SK-N-SH (cell line): ENCODE measurements at regions of chr1 and their contacts with region 1.

Region 1: GRCh38 chr1:207963427-207964194 is 52.7 kb upstream of the CD34 start:
- DNase-seq: peak; percentile 100
- H3K4me3 ChIP-seq: peak overlapping the region; percentile 54 to 55; a peak in 3 of 4 replicates
- H3K27ac ChIP-seq: peak overlapping the region; percentile 37 to 93; a peak in 3 of 4 replicates
- H3K4me1 ChIP-seq: peaks cover 0 to 15% of the 10 kb centered on the region in 2 experiments; a peak in 3 of 4 replicates
- H3K27me3 ChIP-seq: no peaks in the 10 kb centered on the region
- CTCF ChIP-seq: peak; percentile 95
- EP300 ChIP-seq: peak in 1 of 2 experiments; percentile 15; a peak in 1 of 4 replicates
- RAD21 ChIP-seq: peak; percentile 98

Region 2: DNA sequence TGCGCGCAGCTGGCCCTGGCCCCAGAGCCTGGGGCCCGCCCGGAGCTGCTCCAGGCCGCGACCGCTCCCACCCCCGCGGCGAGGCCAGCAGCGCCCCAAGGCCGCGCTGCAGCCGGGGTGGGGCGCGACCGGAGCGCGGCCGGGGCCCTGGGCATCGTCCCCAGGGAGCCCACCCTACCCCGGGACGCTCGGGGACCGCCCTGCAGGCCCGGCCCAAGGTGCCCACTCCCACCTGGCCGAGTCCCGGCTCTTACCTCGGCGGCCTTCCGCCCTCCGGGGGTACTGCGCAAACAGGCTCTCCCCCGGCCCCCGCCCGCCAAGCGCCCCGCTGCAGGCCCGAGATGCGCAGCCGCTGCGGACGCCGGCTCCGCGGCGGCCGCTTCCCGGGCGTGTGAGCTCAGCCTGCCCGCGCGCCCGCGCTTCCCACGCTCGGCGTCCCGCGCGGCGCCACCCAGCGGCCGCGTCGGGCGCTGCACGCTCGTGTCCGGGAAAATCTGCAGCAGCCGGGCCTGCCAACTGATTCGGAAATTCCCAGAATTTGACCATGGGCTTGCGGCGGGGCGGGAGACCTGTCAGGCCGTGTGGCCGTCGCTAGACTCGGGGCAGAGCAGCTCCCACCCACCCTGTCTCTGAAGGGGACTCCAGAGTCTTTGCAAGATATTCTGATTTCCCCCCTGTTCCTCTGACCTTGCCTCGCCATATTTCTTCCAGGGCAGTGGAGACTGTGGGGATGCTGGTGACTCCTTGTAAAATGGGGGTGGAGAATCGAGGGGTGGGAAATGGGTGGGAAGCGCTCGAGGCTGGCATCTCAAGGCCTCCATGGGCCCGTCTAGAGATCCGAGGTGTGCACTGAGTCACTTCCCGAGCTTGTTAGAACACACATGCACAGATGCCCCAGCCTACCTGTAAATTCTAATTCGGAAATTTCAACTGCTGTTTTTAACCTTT is 94.6 kb before region 1 on chr1:
- CTCF ChIA-PET with region 1: interaction called, 43 read pairs
- POLR2A ChIA-PET with region 1: interaction called, 4 read pairs
- DNase-seq: peak; percentile 93
- H3K4me3 ChIP-seq: peak overlapping the region; percentile 78 to 85
- H3K27ac ChIP-seq: peak overlapping the region in 1 of 2 experiments; percentile 47; a peak in 1 of 4 replicates
- H3K4me1 ChIP-seq: peaks cover 0 to 32% of the 10 kb centered on the region in 2 experiments; a peak in 1 of 4 replicates
- H3K27me3 ChIP-seq: no peaks in the 10 kb centered on the region
- CTCF ChIP-seq: peak; percentile 62
- EP300 ChIP-seq: no peak
- RAD21 ChIP-seq: peak; percentile 54; the same call in 1 of the 2 replicates

Region 3: GRCh38 chr1:207910591-207911354 is 52.8 kb before region 1 on chr1 and contains the start of gene CD34:
- CTCF ChIA-PET with region 1: interaction called, 29 read pairs
- POLR2A ChIA-PET with region 1: no interaction called
- DNase-seq: peak; percentile 76
- H3K4me3 ChIP-seq: peak within 1 kb of the TSS; percentile 43 to 46
- H3K27ac ChIP-seq: no peak within 1 kb of the TSS
- H3K4me1 ChIP-seq: peaks cover 0 to 4% of the 10 kb centered on the region in 2 experiments; a peak in 1 of 4 replicates
- H3K27me3 ChIP-seq: peaks cover 11% of the 10 kb centered on the region; the same call in 1 of the 2 replicates
- CTCF ChIP-seq: no peak
- EP300 ChIP-seq: no peak
- RAD21 ChIP-seq: no peak
- polyA plus RNA-seq, gene CD34: 0.59 and 0.62 TPM in 2 replicates

Region 4: DNA sequence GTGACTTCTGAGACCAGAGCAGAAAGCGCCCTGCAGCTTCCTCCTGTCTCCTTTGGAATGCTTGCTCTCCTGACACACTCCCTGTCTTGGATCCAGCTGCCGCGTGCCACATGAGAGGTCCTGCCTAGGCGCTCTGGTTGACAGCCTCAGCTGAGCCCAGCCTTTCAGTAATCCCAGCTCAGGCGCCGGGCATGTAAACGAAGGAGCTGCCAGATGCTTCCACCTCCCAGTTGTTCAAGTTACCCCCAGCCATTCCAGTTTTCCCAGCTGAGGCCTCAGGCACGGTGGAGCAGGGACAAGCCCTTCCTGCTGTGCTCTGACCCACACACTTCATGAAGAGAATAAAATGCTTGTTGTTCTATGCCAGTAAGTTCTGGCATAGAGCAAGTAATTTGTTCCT is 38.4 kb before region 1 on chr1:
- CTCF ChIA-PET with region 1: interaction called, 18 read pairs
- POLR2A ChIA-PET with region 1: interaction called, 4 read pairs
- DNase-seq: no peak
- H3K4me3 ChIP-seq: no peak overlapping the region
- H3K27ac ChIP-seq: no peak overlapping the region
- H3K4me1 ChIP-seq: peaks cover 0 to 8% of the 10 kb centered on the region in 2 experiments; a peak in 1 of 4 replicates
- H3K27me3 ChIP-seq: peaks cover 11% of the 10 kb centered on the region
- CTCF ChIP-seq: no peak
- EP300 ChIP-seq: no peak
- RAD21 ChIP-seq: no peak

Region 5: DNA sequence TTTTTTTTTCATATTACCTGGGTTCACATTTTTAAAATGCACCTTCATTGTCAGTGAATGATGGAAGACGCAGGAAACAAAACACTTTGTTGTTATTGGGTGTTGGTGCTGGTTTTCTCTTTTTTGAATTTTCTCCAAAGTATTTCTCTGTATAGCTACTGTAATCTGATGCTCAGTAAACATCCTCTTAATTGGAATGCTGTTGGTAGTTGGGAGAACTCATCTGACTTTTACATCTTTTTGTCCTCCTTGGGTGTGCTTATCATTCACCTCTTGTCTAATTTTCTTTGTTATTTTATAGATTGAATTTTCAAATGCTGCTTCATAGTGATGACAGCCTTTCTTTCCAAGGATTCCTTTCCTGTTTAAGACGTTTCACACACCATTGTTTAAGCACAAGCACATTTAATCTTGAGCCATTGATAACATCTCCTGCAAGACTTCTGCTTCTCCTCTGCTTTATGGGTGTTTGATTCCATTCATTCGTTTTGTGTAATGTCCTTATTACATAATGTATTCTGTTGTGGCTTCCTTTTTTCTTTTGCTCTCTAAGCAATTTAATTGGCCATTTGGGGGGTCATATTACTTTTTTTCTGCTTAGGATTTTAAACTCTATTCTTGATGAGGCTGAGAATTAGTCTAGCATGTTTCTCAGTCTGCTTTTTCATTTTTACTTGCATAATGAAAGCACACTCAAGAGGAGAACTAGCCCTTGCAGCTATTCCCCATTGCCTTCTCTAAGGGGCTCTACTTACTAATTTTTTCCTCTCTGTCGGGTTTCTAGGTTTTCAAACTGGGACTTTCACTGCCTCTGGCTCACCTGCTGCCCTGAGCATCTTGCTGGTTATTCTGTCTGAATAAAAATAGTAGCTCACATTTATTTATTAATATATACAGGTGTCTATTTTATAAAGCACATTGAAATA is 10.7 kb before region 1 on chr1:
- CTCF ChIA-PET with region 1: interaction called, 38 read pairs
- POLR2A ChIA-PET with region 1: no interaction called
- DNase-seq: no peak
- H3K4me3 ChIP-seq: no peak overlapping the region
- H3K27ac ChIP-seq: no peak overlapping the region
- H3K4me1 ChIP-seq: no peaks in the 10 kb centered on the region; a peak in 1 of 4 replicates
- H3K27me3 ChIP-seq: no peaks in the 10 kb centered on the region; the same call in 1 of the 2 replicates
- CTCF ChIP-seq: no peak
- EP300 ChIP-seq: no peak
- RAD21 ChIP-seq: no peak

Region 6: GRCh38 chr1:208127792-208128529 is 164.3 kb after region 1 on chr1:
- CTCF ChIA-PET with region 1: no interaction called
- POLR2A ChIA-PET with region 1: no interaction called
- DNase-seq: no peak
- H3K4me3 ChIP-seq: no peak overlapping the region
- H3K27ac ChIP-seq: no peak overlapping the region
- H3K4me1 ChIP-seq: peaks cover 0 to 16% of the 10 kb centered on the region in 2 experiments; a peak in 1 of 4 replicates
- H3K27me3 ChIP-seq: no peaks in the 10 kb centered on the region
- CTCF ChIP-seq: no peak
- EP300 ChIP-seq: no peak
- RAD21 ChIP-seq: no peak